GM10248 (cell line): ENCODE measurements at regions of chr2 and their contacts with region 1.

Region 1: DNA sequence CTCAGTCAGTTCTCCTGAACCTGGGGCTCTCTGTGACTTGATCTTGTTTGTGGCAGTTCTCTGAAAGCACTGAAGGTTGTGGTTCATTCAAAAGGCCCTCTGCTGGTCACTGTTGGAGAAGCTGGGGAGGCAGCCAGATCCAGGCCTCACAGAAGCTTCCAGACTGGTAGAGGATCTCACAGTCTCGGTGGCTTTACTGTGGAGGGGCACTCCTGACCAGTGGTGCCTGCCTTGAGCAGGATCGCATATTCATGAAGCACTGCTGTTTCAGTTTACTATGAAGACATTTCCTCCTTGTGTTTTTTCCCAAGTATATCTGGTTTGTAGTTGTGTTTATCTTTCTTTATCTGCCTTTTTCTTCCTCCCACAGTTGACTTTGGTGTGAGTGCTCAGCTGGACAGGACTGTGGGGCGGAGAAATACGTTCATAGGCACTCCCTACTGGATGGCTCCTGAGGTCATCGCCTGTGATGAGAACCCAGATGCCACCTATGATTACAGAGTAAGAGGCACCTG is 133.9 kb downstream of the MAP4K4 start:
- DNase-seq: peak; percentile 55
- CTCF ChIP-seq: peak; percentile 73

Region 2: DNA sequence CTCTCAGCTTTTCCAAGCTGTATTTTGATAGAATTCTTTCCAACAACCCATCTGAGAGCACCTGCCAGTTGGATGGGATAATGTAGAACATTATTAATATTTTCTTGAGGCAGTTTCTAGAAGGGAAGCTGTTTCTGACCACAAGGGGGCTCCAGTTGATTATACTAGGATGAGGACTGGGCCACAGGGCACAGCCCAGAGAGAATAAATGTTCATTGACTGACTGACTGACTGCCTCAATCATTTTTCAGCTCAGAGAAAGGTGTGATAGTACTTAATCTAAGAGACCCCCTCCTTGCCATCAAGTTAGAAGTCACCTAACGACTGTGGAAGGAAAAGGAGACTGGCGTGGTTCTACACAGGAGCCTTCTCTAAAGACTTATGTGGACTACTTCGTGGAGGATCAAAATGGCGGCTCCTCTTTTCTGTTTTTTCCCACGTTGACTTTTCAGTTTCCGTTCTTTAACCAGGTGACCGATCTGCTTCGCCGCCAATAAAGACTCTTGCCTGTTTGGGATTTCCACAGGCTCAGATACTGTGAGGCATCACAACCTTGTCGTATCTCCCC is 412.2 kb before region 1 on chr2:
- CTCF ChIA-PET with region 1: interaction called, 12 read pairs
- POLR2A ChIA-PET with region 1: no interaction called
- DNase-seq: peak; percentile 58
- CTCF ChIP-seq: peak; percentile 37

Region 3: DNA sequence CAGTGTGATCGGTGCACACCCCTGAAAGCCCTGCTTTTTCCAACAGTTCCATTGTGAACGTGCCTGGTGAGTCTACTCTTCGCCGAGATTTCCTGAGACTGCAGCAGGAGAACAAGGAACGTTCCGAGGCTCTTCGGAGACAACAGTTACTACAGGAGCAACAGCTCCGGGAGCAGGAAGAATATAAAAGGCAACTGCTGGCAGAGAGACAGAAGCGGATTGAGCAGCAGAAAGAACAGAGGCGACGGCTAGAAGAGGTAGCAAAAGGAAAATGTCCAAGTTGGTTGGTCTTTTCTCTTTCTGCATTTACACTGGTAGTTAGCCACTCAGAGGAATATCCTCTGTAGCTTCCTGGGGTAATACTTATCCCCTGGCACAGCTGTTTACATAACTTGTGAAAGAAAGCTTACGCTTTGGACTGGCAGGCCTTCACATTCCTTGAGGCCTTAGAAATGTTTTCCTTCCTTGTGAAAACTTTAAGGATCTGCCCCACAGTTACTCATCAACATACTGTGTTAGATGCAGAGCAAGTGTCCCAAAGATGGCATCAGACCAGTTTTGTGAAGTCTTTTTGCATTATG is 12.7 kb after region 1 on chr2:
- CTCF ChIA-PET with region 1: interaction called, 11 read pairs
- POLR2A ChIA-PET with region 1: no interaction called
- DNase-seq: no peak
- CTCF ChIP-seq: no peak